MCF 10A (cell line): ENCODE measurements at regions of chr1 and their contacts with region 1.

Region 1: DNA sequence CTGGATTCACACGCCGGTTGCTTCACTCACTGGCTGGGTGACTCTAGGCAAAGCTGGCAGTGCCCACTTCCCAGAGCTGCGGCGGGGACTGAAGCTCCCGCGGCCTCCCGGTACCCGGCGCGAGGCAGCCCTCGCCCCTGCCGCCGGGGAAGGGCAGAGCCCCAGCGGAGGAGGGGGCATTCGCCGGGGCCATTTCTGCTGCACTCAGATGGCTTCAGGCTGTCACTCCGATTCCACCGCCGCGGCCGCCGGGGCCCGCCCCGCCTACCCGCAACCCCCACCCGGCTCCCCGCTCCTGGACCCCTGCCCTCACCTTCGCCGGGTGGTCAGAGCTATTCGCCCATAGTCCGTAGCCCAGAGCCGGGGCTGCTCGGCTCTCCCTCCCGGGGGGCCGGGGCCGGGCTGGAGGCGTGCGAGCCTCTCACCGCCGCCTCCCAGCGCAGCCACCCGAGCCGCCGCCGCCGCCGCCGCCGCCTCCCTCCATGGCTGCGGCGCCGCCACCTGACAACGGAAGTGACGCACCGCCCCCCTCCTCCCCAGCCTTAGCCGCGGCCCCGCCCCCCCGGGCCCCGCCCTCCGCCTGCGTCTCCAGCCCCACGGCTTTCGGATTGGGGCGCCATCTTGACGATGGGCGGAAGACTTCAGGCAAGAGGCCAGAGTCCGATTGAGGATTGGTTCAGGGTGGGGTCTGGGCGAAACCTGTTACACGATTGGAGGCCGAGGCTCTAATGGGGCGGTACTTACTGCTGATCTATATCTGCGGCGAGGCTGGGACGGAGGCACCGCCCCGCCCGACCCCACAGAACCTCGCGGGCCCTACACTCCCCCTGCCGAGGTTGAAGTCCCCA is at the start of gene STK40:
- DNase-seq: peak; percentile 99
- H3K4me3 Mint-ChIP-seq: peak within 1 kb of the TSS; percentile 89
- H3K27ac Mint-ChIP-seq: peak within 1 kb of the TSS; percentile 99
- H3K4me1 Mint-ChIP-seq: peaks cover 39% of the 10 kb centered on the region
- H3K27me3 Mint-ChIP-seq: no peaks in the 10 kb centered on the region
- CTCF ChIP-seq: no peak
- total RNA-seq, gene STK40: 44.0 and 47.4 TPM in 2 replicates

Region 2: GRCh38 chr1:36342481-36343478 is 42.9 kb before region 1 on chr1:
- CTCF ChIA-PET with region 1: interaction called, 10 read pairs
- POLR2A ChIA-PET with region 1: interaction called, 3 read pairs
- intact Hi-C with region 1: no loop called
- DNase-seq: peak; percentile 74
- H3K4me3 Mint-ChIP-seq: no peak overlapping the region
- H3K27ac Mint-ChIP-seq: peak overlapping the region; percentile 19
- H3K4me1 Mint-ChIP-seq: peaks cover 8% of the 10 kb centered on the region
- H3K27me3 Mint-ChIP-seq: no peaks in the 10 kb centered on the region
- CTCF ChIP-seq: peak; percentile 78

Region 3: DNA sequence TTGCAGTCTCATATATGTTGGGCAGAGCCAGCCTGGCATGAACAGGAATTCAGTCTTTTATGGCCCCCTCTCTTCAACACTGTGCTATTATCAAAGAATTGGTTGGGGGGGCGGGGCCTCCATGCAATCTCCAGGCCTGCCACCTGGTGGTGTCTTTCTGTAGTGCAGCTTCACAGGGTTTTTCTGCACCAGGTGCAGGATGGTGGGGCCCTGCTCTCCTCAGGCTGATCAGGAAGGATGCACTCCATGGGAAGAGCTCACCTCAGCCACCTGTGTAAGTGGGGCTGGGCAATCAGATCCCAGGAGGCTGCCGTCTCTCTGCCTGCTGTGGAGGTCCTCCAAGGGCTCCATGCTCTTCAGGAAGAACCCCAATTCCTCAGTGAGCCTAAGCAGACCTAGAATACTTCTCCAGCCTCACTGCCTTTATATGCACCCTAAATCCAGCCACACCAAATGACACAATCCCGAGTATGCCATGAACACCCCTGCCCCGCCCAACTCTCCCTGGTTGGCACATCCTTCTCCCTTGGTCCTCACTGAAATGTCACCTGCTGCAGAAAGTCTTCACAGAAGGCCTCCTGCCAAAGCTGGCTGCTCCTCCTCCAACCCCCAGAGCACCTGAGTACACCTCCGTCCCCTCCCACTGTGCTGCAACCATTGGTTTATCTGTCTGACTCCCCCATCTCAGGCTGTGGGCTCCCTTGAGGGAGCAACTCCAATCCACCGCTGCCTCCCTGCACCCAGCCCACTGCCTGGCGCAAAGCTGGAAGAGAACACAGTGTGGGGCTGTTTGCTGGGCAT is 16.4 kb before region 1 on chr1:
- CTCF ChIA-PET with region 1: interaction called, 8 read pairs
- POLR2A ChIA-PET with region 1: interaction called, 12 read pairs
- intact Hi-C with region 1: no loop called
- DNase-seq: peak; percentile 76
- H3K4me3 Mint-ChIP-seq: no peak overlapping the region
- H3K27ac Mint-ChIP-seq: peak overlapping the region; percentile 37
- H3K4me1 Mint-ChIP-seq: peaks cover 33% of the 10 kb centered on the region
- H3K27me3 Mint-ChIP-seq: no peaks in the 10 kb centered on the region
- CTCF ChIP-seq: peak; percentile 84

Region 4: GRCh38 chr1:36420836-36421664 is 35.4 kb after region 1 on chr1:
- CTCF ChIA-PET with region 1: interaction called, 6 read pairs
- POLR2A ChIA-PET with region 1: interaction called, 5 read pairs
- intact Hi-C with region 1: loop called (anchors 1 kb)
- DNase-seq: peak; percentile 83
- H3K4me3 Mint-ChIP-seq: no peak overlapping the region
- H3K27ac Mint-ChIP-seq: peak overlapping the region; percentile 76
- H3K4me1 Mint-ChIP-seq: peaks cover 14% of the 10 kb centered on the region
- H3K27me3 Mint-ChIP-seq: no peaks in the 10 kb centered on the region
- CTCF ChIP-seq: peak; percentile 96

Region 5: GRCh38 chr1:36576118-36576517 is 190.5 kb after region 1 on chr1:
- CTCF ChIA-PET with region 1: no interaction called
- POLR2A ChIA-PET with region 1: no interaction called
- intact Hi-C with region 1: no loop called
- DNase-seq: peak; percentile 51
- H3K4me3 Mint-ChIP-seq: no peak overlapping the region
- H3K27ac Mint-ChIP-seq: no peak overlapping the region
- H3K4me1 Mint-ChIP-seq: no peaks in the 10 kb centered on the region
- H3K27me3 Mint-ChIP-seq: peaks cover 43% of the 10 kb centered on the region
- CTCF ChIP-seq: peak; percentile 84